MCF 10A (cell line): ENCODE measurements at regions of chr20 and their contacts with region 1.

Region 1: GRCh38 chr20:23132930-23133559 is 46.9 kb upstream of the CD93 start:
- DNase-seq: no peak
- H3K4me3 Mint-ChIP-seq: no peak overlapping the region
- H3K27ac Mint-ChIP-seq: no peak overlapping the region
- H3K4me1 Mint-ChIP-seq: peaks cover 27% of the 10 kb centered on the region
- H3K27me3 Mint-ChIP-seq: no peaks in the 10 kb centered on the region
- CTCF ChIP-seq: no peak

Region 2: DNA sequence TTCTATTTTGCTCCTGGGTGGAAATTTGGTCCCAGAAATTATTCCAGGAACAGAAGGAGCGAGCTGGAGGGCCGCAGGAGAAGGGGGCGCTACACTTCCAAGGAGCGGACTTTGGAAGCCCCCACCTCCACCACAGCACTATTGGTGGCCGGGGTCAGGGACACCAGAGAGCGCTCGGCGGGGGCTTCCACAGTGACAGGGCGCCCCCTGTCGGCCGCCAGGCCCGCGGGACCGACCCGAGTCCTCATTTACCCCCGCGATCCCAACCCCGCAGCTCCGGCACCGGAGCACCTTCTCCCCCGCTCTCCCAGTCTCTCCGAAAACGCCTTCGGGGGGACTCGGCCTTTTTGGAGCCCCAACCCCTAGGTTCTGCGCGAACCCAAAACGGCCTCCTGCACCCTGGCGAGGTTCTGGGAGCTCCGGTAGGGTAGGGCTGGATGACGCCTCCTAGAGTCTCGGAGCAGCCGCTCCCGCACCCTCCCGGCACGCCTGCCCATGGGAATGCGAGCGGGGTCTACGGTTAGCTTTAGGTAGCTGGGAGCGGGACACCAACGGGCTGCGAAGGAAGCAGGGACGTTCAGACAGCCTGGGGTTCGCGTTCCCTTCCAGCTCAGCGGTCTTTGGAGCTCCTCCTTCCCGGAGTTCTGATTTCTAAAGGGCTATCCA is 546.3 kb before region 1 on chr20:
- CTCF ChIA-PET with region 1: no interaction called
- POLR2A ChIA-PET with region 1: no interaction called
- intact Hi-C with region 1: no loop called
- DNase-seq: peak; percentile 36
- H3K4me3 Mint-ChIP-seq: no peak overlapping the region
- H3K27ac Mint-ChIP-seq: no peak overlapping the region
- H3K4me1 Mint-ChIP-seq: no peaks in the 10 kb centered on the region
- H3K27me3 Mint-ChIP-seq: peaks cover 18% of the 10 kb centered on the region
- CTCF ChIP-seq: peak; percentile 83

Region 3: GRCh38 chr20:23099791-23100698 is 33.0 kb before region 1 on chr20:
- CTCF ChIA-PET with region 1: interaction called, 14 read pairs
- POLR2A ChIA-PET with region 1: interaction called, 15 read pairs
- intact Hi-C with region 1: no loop called
- DNase-seq: peak; percentile 81
- H3K4me3 Mint-ChIP-seq: peak overlapping the region; percentile 12
- H3K27ac Mint-ChIP-seq: no peak overlapping the region
- H3K4me1 Mint-ChIP-seq: peaks cover 49% of the 10 kb centered on the region
- H3K27me3 Mint-ChIP-seq: no peaks in the 10 kb centered on the region
- CTCF ChIP-seq: no peak

Region 4: GRCh38 chr20:23147964-23148730 is 15.1 kb after region 1 on chr20:
- CTCF ChIA-PET with region 1: interaction called, 6 read pairs
- POLR2A ChIA-PET with region 1: interaction called, 555 read pairs
- intact Hi-C with region 1: no loop called
- DNase-seq: peak; percentile 80
- H3K4me3 Mint-ChIP-seq: peak overlapping the region; percentile 28
- H3K27ac Mint-ChIP-seq: peak overlapping the region; percentile 89
- H3K4me1 Mint-ChIP-seq: peaks cover 55% of the 10 kb centered on the region
- H3K27me3 Mint-ChIP-seq: no peaks in the 10 kb centered on the region
- CTCF ChIP-seq: no peak